Ovary (tissue), 10 donors: ENCODE measurements at regions of chr10 and their contacts with region 1.

Region 1: GRCh38 chr10:59240582-59241183 is 64.2 kb downstream of the PHYHIPL start:
- DNase-seq: peak in 1 of 5 donors; percentile 18
- H3K4me3 ChIP-seq: no peak overlapping the region
- H3K27ac ChIP-seq: no peak overlapping the region
- H3K4me1 ChIP-seq: no peaks in the 10 kb centered on the region
- H3K27me3 ChIP-seq: no peaks in the 10 kb centered on the region
- CTCF ChIP-seq: peak; percentile 51 to 96 (median 79)
- EP300 ChIP-seq: no peak
- POLR2A ChIP-seq: peak; percentile 11

Region 2: GRCh38 chr10:59580026-59580863 is 339.6 kb after region 1 on chr10:
- intact Hi-C with region 1: loop called in 3 of 4 experiments (anchors 5 to 10 kb)
- DNase-seq: peak in 1 of 5 donors; percentile 24
- H3K4me3 ChIP-seq: no peak overlapping the region
- H3K27ac ChIP-seq: peak overlapping the region in 1 of 2 donors; percentile 27
- H3K4me1 ChIP-seq: peaks cover 3% of the 10 kb centered on the region
- H3K27me3 ChIP-seq: no peaks in the 10 kb centered on the region
- CTCF ChIP-seq: peak in 2 of 3 donors; percentile 59 to 63
- EP300 ChIP-seq: no peak
- POLR2A ChIP-seq: no peak